ENCODE measurements at regions of chr15 and their contacts with region 1.

Region 1: DNA sequence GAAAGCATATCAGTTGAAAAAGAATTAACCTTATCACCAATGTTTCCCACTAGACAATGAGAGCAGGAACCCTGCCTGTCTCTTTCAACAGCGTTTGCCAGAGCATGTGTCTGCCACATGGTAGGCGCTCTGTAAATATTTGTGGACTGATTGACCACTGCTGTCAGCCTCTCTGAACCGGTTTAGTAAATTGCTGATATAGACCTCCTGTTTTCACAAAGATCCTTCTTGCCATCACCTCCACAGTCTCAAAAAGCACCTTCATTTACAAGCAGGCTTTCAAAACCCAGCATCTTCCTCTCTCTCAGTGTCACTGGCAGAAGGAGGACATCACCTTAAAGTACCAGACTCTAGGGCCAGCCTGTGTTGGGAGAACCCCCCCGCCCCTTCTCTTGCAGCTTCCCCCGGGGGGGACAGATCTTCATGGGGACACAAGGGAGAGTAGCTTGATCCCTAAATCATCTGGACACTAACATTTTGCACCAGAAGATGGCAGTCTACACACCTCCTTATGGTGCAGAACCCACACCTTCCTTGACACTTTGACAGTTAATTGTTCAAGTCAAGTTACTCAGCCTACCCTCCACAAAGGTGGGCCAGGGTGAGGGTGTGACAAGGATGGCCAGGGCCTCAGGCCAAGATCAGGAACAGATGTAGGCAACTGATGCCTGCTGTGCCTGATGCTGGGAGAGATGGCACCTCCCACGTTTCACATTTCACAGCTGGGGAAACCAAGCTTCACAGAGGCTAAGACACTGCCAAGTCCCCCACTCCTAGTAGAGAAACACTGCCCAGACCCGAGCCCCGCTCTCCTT is 37.8 kb upstream of the USP3 start:
- DNase-seq: peak; percentile 88 to 91
- ATAC-seq: peak; percentile 82 to 89
- H3K4me3 ChIP-seq: no peak overlapping the region
- H3K27ac ChIP-seq: peak overlapping the region; percentile 46 to 70
- H3K4me1 ChIP-seq: peaks cover 47% of the 10 kb centered on the region
- CTCF ChIP-seq: peak; percentile 95
- EP300 ChIP-seq: no peak
- POLR2A ChIP-seq: no peak
- RAD21 ChIP-seq: peak; percentile 96 to 97

Region 2: DNA sequence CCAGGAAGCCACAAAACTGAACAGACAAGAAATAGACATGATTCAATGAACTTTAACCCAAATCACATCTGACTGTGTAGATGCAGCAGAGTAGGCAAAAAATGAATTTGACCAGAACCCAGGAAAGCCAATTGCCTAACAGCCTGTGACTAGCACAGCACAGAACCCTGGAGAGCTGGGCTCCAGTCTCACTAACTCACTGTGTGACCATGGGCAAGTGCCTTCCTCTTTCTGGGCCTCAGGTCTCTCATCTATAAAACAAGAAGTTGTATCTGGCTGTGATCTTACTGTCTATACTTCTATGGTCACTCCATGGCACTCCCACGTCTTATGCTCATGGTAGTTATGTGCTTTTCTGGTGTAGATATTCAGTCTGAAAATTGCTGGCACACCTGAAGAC is 10.3 kb before region 1 on chr15:
- CTCF ChIA-PET with region 1: interaction called, 24 read pairs
- POLR2A ChIA-PET with region 1: no interaction called
- DNase-seq: no peak
- ATAC-seq: 0 out of 6 replicates have a peak, but pooled peaks of 1 of the 2 experiments have one; percentile 31
- H3K4me3 ChIP-seq: no peak overlapping the region
- H3K27ac ChIP-seq: peak overlapping the region in 1 of 2 experiments; percentile 23; a peak in 1 of 6 replicates
- H3K4me1 ChIP-seq: peaks cover 11% of the 10 kb centered on the region
- CTCF ChIP-seq: no peak
- EP300 ChIP-seq: no peak
- POLR2A ChIP-seq: no peak
- RAD21 ChIP-seq: no peak

Region 3: GRCh38 chr15:63497642-63498467 is 31.3 kb after region 1 on chr15:
- CTCF ChIA-PET with region 1: interaction called, 127 read pairs
- POLR2A ChIA-PET with region 1: interaction called, 7 read pairs
- DNase-seq: peak in 1 of 2 experiments; percentile 37
- ATAC-seq: no peak
- H3K4me3 ChIP-seq: no peak overlapping the region
- H3K27ac ChIP-seq: peak overlapping the region; percentile 77 to 82
- H3K4me1 ChIP-seq: peaks cover 89% of the 10 kb centered on the region
- CTCF ChIP-seq: no peak
- EP300 ChIP-seq: no peak
- POLR2A ChIP-seq: no peak
- RAD21 ChIP-seq: no peak

Region 4: DNA sequence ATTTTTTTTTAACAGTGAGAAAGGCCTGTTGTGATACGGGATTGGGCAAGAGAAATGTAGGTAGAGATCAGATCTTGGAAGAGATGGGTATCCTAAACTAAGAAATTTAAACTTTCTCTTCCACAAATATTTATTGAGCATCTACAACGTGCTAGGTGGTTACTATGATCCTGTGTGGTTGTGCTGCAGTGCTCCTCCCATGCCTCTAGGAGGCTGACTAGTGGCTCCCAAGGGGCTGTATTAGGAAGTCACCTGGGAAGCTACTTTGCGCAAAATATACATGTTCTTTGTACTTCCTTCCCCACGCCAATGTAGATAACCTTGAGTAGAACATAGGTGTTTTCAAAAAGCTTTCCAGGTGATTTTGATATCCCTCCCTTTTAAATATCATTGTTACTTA is 65.0 kb after region 1 on chr15:
- CTCF ChIA-PET with region 1: interaction called, 15 read pairs
- POLR2A ChIA-PET with region 1: no interaction called
- DNase-seq: peak in 1 of 2 experiments; percentile 30
- ATAC-seq: peak; percentile 79 to 84; a peak in 5 of 6 replicates
- H3K4me3 ChIP-seq: no peak overlapping the region
- H3K27ac ChIP-seq: no peak overlapping the region
- H3K4me1 ChIP-seq: peaks cover 40% of the 10 kb centered on the region
- CTCF ChIP-seq: no peak
- EP300 ChIP-seq: no peak
- POLR2A ChIP-seq: no peak
- RAD21 ChIP-seq: peak in 1 of 2 experiments; percentile 20; a peak in 1 of 5 replicates

Region 5: GRCh38 chr15:63560741-63561448 is 94.3 kb after region 1 on chr15:
- CTCF ChIA-PET with region 1: interaction called, 11 read pairs
- POLR2A ChIA-PET with region 1: no interaction called
- DNase-seq: no peak
- ATAC-seq: peak in 1 of 2 experiments; percentile 25; a peak in 3 of 6 replicates
- H3K4me3 ChIP-seq: no peak overlapping the region
- H3K27ac ChIP-seq: no peak overlapping the region
- H3K4me1 ChIP-seq: peaks cover 15% of the 10 kb centered on the region
- CTCF ChIP-seq: no peak
- EP300 ChIP-seq: no peak
- POLR2A ChIP-seq: no peak
- RAD21 ChIP-seq: no peak

Region 6: DNA sequence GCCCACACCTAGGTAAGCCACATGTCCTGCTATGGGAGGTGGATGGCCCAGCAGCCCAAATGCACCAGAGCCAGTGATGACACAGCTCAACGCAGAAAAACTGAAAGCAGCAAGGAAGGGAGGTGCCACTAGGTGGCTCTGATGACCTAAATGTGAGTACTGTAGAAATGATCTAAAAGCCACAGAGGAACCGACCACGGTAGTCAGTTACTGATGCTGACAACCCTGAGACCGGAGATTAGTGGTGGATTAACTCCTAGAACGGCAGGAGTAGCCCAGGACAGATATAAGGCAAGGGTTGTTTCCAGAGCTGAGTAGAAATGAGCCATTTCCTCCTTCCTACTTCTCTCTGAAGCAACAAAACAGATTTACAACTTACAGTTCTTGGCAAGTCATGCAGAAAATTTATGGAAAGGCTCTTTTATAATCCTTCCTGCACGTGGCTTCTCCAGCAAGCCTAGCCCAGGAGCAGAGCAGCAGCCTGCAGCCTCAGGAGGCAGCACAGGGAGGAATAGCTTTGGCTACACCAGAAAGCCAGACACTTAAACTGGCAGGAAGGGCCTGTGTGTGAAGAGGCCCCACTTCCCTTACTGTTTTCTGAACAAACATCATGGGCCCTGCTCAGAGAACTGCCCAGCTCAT is 143.7 kb after region 1 on chr15:
- CTCF ChIA-PET with region 1: interaction called, 14 read pairs
- POLR2A ChIA-PET with region 1: no interaction called
- DNase-seq: peak; percentile 85 to 93
- ATAC-seq: peak; percentile 92 to 96
- H3K4me3 ChIP-seq: no peak overlapping the region
- H3K27ac ChIP-seq: peak overlapping the region; percentile 18 to 21; a peak in 3 of 6 replicates
- H3K4me1 ChIP-seq: peaks cover 17% of the 10 kb centered on the region
- CTCF ChIP-seq: peak; percentile 96
- EP300 ChIP-seq: no peak
- POLR2A ChIP-seq: no peak
- RAD21 ChIP-seq: peak; percentile 94 to 95

Region 7: DNA sequence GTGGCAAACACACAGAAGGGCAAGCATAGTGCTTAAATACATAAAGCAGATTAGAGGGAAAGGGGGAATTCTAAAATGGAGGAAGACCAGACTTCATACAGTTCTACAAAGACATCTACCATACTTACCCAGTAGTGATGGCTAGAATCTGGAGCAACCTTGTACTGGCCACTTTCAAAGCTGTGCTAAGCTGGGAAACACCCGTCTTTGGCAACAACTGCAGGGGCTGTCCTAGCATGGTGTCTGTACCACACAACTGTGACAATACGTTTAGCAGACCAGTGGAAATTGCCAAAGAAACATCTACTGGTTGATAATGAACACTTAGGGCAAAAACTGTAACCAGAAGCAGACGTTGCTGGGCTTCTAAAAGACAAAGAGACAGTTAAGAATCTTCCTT is 227.6 kb after region 1 on chr15:
- CTCF ChIA-PET with region 1: no interaction called
- POLR2A ChIA-PET with region 1: no interaction called
- DNase-seq: no peak
- ATAC-seq: no peak
- H3K4me3 ChIP-seq: no peak overlapping the region
- H3K27ac ChIP-seq: no peak overlapping the region
- H3K4me1 ChIP-seq: no peaks in the 10 kb centered on the region
- CTCF ChIP-seq: no peak
- EP300 ChIP-seq: no peak
- POLR2A ChIP-seq: no peak
- RAD21 ChIP-seq: no peak

Measured in A549 (cell line).